Prostate gland (tissue), 2 donors: ENCODE measurements at regions of chr13 and their contacts with region 1.

Region 1: DNA sequence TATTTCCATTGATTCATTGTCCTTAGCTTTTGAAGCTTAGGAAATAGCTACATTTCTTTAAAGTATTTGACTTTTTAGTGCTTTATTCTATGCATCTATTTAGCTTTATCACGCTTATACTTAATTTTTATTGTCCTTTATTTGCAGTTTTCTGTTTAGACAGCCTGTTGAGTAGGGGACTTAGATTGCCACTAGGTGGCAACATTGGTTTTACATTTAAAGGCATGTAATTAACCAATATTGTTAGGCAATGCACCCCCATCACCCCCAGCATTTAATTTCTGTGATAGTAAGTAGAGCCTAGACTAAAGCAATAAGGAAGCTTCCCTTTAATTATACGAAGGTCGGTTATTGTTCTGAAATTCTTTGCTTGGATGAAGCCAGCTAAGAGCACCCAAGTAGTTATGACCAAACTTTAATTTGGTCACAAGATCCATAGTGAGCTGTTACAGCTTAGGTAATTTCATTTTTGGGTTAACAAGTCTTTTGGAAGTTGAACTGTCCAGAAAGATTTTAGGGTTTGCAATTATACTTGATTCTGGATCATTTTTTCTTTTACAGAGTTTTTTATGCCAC is 36.5 kb downstream of the B3GLCT start:
- DNase-seq: no peak
- H3K4me3 ChIP-seq: no peak overlapping the region
- H3K27ac ChIP-seq: no peak overlapping the region
- H3K4me1 ChIP-seq: no peaks in the 10 kb centered on the region
- H3K27me3 ChIP-seq: no peaks in the 10 kb centered on the region
- CTCF ChIP-seq: peak; percentile 45 to 73 (median 68)
- POLR2A ChIP-seq: no peak

Region 2: GRCh38 chr13:31424117-31424729 is 187.9 kb after region 1 on chr13:
- intact Hi-C with region 1: loop called (anchors 2 kb)
- DNase-seq: peak; percentile 68
- H3K4me3 ChIP-seq: no peak overlapping the region
- H3K27ac ChIP-seq: no peak overlapping the region
- H3K4me1 ChIP-seq: no peaks in the 10 kb centered on the region
- H3K27me3 ChIP-seq: no peaks in the 10 kb centered on the region
- CTCF ChIP-seq: peak; percentile 61 to 83 (median 75)
- POLR2A ChIP-seq: no peak

Region 3: DNA sequence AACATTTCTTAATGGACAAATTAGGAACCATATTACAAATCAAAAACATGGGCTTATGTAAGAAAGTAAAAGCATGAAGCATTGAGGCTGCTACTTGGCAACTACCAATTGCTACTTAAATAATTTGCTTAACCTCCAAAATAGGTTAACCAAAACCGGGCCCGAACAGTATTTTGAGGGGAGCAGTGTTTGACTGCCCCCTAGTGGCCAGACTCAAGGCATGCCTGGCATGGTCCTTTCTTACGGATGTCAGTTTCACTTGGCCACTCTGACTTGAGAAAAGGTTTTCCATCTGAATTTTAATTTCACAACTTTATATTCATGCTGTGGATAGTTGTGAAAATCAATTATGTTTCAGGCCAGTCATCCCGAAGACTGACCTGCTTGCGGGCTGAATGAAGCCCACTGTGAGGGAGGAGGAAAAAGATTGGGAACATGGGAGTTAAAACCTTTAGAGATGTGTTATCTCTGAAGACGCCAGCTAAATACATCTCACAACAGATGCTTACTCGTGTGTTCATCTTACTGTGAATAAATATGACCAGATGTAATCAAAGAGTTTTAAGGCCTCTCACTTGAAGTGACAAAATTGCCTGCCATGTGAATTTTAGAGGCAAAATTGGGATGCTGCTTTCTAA is 505.9 kb after region 1 on chr13:
- intact Hi-C with region 1: loop called (anchors 10 kb)
- DNase-seq: peak; percentile 23
- H3K4me3 ChIP-seq: no peak overlapping the region
- H3K27ac ChIP-seq: no peak overlapping the region
- H3K4me1 ChIP-seq: no peaks in the 10 kb centered on the region
- H3K27me3 ChIP-seq: no peaks in the 10 kb centered on the region
- CTCF ChIP-seq: peak; percentile 76 to 94 (median 82)
- POLR2A ChIP-seq: no peak